A673 (cell line): ENCODE measurements at regions of chr10 and their contacts with region 1.

Region 1: DNA sequence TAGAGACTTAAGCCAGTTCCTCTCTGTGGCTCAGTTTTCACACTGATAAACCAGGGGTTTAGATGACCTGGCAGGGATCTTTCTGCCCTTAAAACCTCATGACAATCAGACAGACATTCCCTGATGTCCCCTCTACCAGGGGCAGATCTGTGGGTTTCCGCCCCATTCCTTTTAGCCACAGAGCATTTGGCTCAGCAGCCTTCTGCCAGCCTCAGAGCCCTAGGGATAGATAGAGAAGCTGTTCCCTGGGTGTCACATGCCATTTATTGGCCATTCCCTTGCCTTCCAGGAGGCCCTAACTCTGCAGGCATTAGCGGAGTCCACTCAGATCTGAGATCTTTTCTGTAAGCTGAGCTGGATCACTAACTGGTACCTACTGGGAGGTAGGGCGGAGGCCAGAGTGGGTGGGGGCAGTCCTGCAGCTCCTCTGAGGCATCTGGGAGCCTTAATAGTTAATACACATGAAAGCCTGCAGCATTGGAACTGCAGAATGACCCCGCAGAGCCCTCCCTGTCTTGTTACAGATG is 101.5 kb downstream of the ZMIZ1 start:
- DNase-seq: no peak
- H3K4me3 ChIP-seq: no peak overlapping the region
- H3K27ac ChIP-seq: no peak overlapping the region
- H3K4me1 ChIP-seq: no peaks in the 10 kb centered on the region
- H3K27me3 ChIP-seq: no peaks in the 10 kb centered on the region
- CTCF ChIP-seq: no peak

Region 2: GRCh38 chr10:78995987-78996791 is 174.1 kb before region 1 on chr10:
- CTCF ChIA-PET with region 1: no interaction called
- POLR2A ChIA-PET with region 1: interaction called, 11 read pairs
- intact Hi-C with region 1: no loop called
- DNase-seq: no peak
- H3K4me3 ChIP-seq: no peak overlapping the region
- H3K27ac ChIP-seq: no peak overlapping the region
- H3K4me1 ChIP-seq: peaks cover 14% of the 10 kb centered on the region
- H3K27me3 ChIP-seq: no peaks in the 10 kb centered on the region
- CTCF ChIP-seq: no peak